Activated naive CD4-positive, alpha-beta T cell treated with anti-CD3 and anti-CD28 coated beads for 36 hours (primary cell): ENCODE measurements at regions of chr10 and their contacts with region 1.

Region 1: GRCh38 chr10:27241652-27242472 is 1.3 kb upstream of the ACBD5 start:
- DNase-seq: peak; percentile 89
- H3K4me3 Mint-ChIP-seq: peak overlapping the region; percentile 93
- H3K27ac Mint-ChIP-seq: peak overlapping the region; percentile 100
- H3K4me1 Mint-ChIP-seq: peaks cover 22% of the 10 kb centered on the region
- H3K27me3 Mint-ChIP-seq: no peaks in the 10 kb centered on the region

Region 2: DNA sequence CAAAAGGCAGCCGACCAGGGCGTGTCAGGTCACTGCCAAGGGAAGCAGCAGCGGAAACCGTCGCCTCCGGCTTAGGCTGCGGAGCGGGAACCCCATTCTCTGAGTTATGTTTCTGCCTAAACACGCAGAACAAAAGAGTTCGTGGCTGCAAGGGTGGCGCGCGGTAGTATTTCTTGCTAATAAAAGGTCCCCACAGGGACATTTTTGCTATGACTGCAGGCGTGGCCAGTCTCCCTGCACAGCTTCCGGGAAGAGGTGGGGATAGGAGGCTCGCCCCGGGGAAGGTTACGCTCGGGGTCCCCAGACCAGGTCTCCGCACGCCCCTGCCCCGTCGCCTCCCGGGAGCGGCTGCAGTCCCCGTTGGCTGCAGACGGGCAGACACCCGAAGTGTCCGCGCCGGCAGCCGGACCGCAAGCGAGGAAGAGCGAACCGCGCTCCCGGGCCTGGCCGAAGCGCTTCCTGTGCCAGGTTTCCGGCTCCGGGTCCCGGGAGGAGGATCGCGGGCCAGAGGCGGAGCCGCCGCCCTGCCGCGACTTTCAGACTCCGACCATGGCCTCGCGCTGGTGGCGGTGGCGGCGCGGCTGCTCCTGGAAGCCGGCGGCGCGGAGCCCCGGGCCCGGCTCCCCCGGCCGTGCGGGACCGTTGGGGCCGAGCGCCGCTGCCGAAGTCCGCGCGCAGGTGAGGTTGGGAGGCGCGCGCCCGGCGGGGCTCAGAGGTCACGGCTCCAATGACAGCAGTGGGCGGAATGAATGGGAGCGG is 544.5 kb before region 1 on chr10 and contains the start of gene PDSS1:
- CTCF ChIA-PET with region 1: no interaction called
- intact Hi-C with region 1: loop called (anchors 2 kb)
- DNase-seq: peak; percentile 72
- H3K4me3 Mint-ChIP-seq: peak within 1 kb of the TSS; percentile 96
- H3K27ac Mint-ChIP-seq: peak within 1 kb of the TSS; percentile 89
- H3K4me1 Mint-ChIP-seq: peaks cover 39% of the 10 kb centered on the region
- H3K27me3 Mint-ChIP-seq: no peaks in the 10 kb centered on the region
- total RNA-seq, gene PDSS1: 14.5 to 16.0 TPM

Region 3: DNA sequence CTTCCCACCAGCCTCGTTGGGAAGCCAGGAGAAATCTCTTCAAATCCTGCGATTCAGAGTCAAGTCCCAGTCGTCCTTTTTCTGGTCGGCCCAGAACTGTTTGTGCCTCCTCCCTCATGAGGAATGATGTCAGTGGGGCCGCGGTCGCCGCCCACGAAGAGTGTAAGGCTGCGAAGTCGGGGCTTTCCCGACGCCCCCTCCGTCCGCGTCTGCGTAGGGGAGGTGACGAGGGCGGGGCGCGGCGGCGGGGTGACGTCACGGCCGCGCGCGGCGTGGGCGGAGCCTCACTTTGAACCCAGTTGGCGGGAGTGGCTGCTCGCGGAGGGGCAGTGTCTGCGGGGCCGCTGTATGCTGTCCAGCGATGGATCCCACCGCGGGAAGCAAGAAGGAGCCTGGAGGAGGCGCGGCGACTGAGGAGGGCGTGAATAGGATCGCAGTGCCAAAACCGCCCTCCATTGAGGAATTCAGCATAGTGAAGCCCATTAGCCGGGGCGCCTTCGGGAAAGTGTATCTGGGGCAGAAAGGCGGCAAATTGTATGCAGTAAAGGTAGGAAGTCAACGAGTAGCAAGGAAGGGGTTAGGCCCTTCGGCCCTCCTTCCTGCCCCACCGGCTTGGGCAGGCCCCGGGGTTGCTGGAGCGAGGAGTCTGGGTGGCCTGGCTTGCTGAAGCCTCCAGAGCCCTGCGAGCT is 86.7 kb before region 1 on chr10 and contains the start of gene MASTL:
- CTCF ChIA-PET with region 1: interaction called, 3 read pairs
- intact Hi-C with region 1: loop called (anchors 1 kb)
- DNase-seq: peak; percentile 95
- H3K4me3 Mint-ChIP-seq: peak within 1 kb of the TSS; percentile 94
- H3K27ac Mint-ChIP-seq: peak within 1 kb of the TSS; percentile 100
- H3K4me1 Mint-ChIP-seq: peaks cover 46% of the 10 kb centered on the region
- H3K27me3 Mint-ChIP-seq: no peaks in the 10 kb centered on the region
- total RNA-seq, gene MASTL: 50.7 to 51.3 TPM

Region 4: GRCh38 chr10:27360581-27361172 is 118.8 kb after region 1 on chr10:
- CTCF ChIA-PET with region 1: no interaction called
- intact Hi-C with region 1: loop called (anchors 5 kb)
- DNase-seq: peak; percentile 89
- H3K4me3 Mint-ChIP-seq: no peak overlapping the region
- H3K27ac Mint-ChIP-seq: no peak overlapping the region
- H3K4me1 Mint-ChIP-seq: peaks cover 3% of the 10 kb centered on the region
- H3K27me3 Mint-ChIP-seq: no peaks in the 10 kb centered on the region

Region 5: DNA sequence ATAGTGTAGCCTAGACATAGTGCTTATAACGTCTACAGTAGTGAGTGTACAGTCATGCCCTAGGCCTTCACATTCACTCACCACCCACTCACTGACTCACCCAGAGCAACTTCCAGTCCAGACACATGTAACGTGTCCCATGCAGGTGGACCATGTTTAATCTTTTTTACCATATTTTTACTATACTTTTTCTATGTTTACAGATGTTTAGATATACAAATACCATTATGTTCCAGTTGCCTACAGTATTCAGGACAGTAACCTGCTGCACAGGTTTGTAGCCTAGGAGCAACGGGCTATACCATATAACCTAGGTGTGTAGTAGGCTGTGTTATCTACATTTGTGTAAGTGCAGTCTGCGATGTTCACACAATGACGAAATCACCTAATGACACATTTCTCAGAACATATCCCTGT is 1050.0 kb after region 1 on chr10:
- CTCF ChIA-PET with region 1: no interaction called
- intact Hi-C with region 1: loop called (anchors 10 kb)
- DNase-seq: peak; percentile 84
- H3K4me3 Mint-ChIP-seq: no peak overlapping the region
- H3K27ac Mint-ChIP-seq: peak overlapping the region; percentile 89
- H3K4me1 Mint-ChIP-seq: peaks cover 73% of the 10 kb centered on the region
- H3K27me3 Mint-ChIP-seq: no peaks in the 10 kb centered on the region

Region 6: DNA sequence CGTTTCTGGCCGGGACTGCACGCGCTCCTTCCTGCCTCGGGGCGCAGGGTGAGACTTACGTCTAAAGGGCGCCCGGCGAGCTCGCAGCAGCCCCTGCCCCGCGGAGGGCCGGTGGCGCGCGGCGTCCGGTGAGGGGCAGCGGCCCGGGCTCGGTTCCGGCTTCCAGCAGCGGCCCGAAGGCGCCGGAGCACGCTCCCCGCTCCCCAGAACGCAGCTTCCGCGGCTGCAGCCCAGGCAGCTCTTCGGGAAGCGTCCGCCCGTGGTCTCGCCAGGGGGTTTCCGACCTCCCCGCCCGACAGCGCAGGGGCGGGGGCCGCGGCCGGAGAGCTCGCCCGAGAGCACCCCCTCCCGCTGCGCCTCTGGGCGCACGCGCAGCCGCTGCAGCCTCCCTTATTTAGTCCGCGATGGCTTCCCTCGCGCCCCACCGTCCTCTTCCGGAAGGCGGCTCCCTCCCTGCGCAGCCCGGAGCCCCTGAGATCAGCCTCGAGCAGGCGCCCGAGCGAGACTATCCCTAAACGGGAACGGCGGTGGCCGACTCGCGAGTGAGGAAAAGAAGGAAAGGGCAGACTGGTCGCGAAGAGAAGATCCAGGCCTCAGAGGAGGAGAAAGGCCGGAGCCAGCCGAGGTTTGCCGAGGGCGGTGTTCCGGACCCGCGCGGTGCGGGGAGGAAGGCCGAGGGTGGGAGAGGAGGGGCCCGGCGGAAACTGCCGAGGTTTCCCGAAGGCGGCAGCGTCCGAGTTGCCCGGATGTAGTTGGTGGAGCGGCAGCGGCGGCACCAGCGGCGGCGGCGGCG is 1290.7 kb after region 1 on chr10 and contains the start of gene WAC:
- CTCF ChIA-PET with region 1: no interaction called
- intact Hi-C with region 1: loop called (anchors 5 kb)
- DNase-seq: peak; percentile 98
- H3K4me3 Mint-ChIP-seq: peak within 1 kb of the TSS; percentile 99
- H3K27ac Mint-ChIP-seq: peak within 1 kb of the TSS; percentile 100
- H3K4me1 Mint-ChIP-seq: peaks cover 51% of the 10 kb centered on the region
- H3K27me3 Mint-ChIP-seq: no peaks in the 10 kb centered on the region
- total RNA-seq, gene WAC: 77.1 to 82.9 TPM